ENCODE measurements at regions of chr4 and their contacts with region 1.

Region 1: DNA sequence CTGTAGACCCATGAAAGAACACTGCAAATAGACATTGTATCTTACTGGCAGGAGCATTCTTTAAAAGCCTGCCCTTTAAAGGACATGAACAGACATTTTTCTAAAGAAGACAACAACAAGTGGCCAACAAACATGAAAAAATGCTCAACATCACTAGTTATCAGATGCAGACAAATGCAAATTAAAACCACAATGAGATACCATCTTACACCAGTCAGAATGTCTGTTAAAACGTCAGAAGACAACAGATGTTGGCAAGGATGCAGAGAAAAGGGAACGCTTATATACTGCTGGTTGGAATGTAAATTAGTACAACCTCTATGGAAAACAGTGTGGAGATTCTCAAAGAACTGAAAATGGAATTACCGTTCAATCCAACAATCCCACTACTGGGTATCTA is 77.2 kb downstream of the ATP10D start:
- DNase-seq: no peak
- H3K4me3 ChIP-seq: no peak overlapping the region
- H3K27ac ChIP-seq: no peak overlapping the region
- H3K4me1 ChIP-seq: no peaks in the 10 kb centered on the region
- H3K27me3 ChIP-seq: no peaks in the 10 kb centered on the region
- CTCF ChIP-seq: no peak

Region 2: DNA sequence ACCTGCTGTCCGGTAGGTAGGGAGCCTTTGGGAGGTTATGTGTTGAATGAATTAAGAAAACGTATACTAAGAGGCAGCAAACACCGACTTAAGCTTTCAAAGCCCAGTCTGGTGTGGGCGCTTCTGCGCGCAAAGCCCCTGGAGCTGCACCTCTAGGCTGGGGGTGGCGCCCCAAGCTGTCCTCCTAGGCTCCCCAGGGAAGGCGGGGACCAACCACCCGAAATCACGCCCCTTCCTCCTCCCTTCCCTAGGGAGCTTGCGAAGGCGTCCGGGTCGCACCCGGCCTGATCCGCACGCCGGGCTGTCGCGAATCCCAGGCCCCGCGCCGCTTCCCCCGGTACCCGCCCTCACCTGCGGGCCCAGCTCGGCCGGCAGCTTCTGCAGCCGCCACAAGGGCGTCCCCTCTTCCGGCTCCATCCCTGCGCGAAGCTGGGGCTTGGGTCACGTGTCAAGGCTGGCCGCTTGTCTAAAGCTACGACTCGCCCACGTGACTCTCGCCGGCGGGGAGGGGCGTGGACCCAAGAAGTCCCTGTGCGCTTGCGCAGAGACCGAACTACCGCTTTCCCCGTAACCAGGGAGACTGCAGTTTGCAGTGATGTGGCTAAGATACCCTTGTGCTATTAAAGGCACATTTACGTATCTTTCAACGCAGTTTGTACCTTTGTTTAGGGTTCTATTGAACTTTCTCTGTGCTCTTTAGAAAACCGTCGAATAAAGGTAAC is 98.9 kb before region 1 on chr4 and contains the start of gene COMMD8:
- intact Hi-C with region 1: loop called (anchors 10 kb)
- DNase-seq: peak; percentile 97
- H3K4me3 ChIP-seq: peak within 1 kb of the TSS; percentile 79
- H3K27ac ChIP-seq: peak within 1 kb of the TSS; percentile 90
- H3K4me1 ChIP-seq: peaks cover 28% of the 10 kb centered on the region
- H3K27me3 ChIP-seq: no peaks in the 10 kb centered on the region
- CTCF ChIP-seq: peak; percentile 56
- total RNA-seq, gene COMMD8: 20.8 TPM

Region 3: DNA sequence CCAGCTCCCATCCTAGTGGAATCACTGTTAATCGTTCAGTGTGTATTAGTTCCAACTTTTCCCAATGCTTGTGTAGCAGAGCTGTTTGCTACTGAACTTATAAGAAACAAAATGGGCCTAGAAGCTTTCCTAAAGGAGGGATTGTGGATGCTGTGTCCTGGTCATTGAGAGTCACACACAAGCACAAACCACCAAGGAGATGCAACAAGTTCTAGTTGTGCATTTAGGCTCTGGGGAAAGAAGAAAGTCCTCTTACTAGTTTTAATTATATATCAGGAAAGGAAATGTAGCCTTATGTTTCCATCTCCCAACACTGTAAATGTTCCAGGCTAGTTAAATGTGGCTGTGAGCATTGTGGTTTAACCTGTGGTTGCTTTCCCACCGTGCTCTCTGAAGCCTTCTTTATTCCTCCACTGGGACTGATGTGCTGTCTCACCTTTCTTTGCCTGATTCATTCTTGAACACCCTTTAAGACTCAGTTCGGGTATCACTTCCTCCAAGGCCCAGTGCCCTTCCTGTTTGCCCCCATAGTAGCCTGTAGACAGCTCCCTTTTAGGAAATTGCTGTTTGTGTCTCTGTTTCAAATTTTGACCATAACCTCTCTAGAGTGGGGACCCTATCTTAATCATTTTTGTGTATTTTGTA is 42.9 kb before region 1 on chr4:
- intact Hi-C with region 1: no loop called
- DNase-seq: no peak
- H3K4me3 ChIP-seq: no peak overlapping the region
- H3K27ac ChIP-seq: no peak overlapping the region
- H3K4me1 ChIP-seq: no peaks in the 10 kb centered on the region
- H3K27me3 ChIP-seq: no peaks in the 10 kb centered on the region
- CTCF ChIP-seq: no peak

Measured in left ventricle myocardium inferior (tissue), 1 donor.